BJ (cell line): ENCODE measurements at regions of chr20 and their contacts with region 1.

Region 1: GRCh38 chr20:51326201-51326819 is 216.2 kb downstream of the NFATC2 start:
- DNase-seq: no peak
- H3K4me3 ChIP-seq: no peak overlapping the region
- H3K27me3 ChIP-seq: no peaks in the 10 kb centered on the region
- CTCF ChIP-seq: peak; percentile 77

Region 2: DNA sequence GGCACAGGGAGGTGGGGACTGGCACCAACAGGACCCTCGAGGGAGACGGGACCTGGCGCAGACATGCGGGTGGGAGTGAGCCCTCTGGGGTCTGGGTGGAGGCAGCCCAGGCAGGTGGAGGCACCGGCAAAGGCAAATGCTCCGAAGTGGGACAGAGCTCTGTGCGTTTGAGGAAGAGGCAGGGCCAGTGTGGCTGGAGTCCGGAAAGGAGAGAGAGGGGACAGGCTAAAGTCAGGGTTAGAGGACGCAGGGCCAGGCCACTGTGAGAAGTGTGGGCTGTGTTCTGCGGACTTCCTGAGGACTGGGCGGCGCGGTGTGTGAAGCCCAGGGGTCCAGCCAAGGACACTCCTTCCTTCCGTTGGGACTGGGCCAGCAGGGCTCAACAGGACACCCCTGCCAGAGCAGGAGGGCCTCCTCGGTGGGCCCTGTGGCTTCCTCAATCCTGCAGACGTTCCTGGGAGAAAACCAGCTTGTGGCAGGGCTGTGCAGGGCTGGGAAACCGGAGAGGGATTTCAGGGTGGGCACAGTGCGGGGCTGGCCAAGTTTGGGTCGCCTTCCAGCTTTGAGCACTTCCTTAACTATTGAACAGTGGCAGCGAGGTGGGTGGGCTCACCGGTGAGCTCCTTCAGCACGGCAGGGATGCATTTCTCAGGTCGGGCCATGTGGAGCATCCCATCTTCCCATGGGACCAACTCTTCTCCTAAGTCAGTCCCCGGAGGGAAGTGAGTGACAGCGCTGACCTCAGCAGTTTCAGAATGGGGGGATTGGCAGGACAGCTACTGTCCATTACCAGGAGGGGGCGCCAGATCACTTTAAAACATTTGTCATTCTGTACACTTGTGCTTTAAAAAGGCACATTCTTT is 345.2 kb before region 1 on chr20:
- CTCF ChIA-PET with region 1: interaction called, 30 read pairs
- POLR2A ChIA-PET with region 1: no interaction called
- DNase-seq: no peak
- H3K4me3 ChIP-seq: no peak overlapping the region
- H3K27me3 ChIP-seq: no peaks in the 10 kb centered on the region
- CTCF ChIP-seq: peak; percentile 79

Region 3: GRCh38 chr20:50987592-50988210 is 338.6 kb before region 1 on chr20:
- CTCF ChIA-PET with region 1: interaction called, 49 read pairs
- POLR2A ChIA-PET with region 1: no interaction called
- DNase-seq: peak; percentile 44
- H3K4me3 ChIP-seq: no peak overlapping the region
- H3K27me3 ChIP-seq: no peaks in the 10 kb centered on the region
- CTCF ChIP-seq: peak; percentile 80

Region 4: GRCh38 chr20:51311606-51312495 is 14.5 kb before region 1 on chr20:
- CTCF ChIA-PET with region 1: interaction called, 29 read pairs
- POLR2A ChIA-PET with region 1: no interaction called
- DNase-seq: no peak
- H3K4me3 ChIP-seq: no peak overlapping the region
- H3K27me3 ChIP-seq: no peaks in the 10 kb centered on the region
- CTCF ChIP-seq: no peak